Esophagus squamous epithelium (tissue), 5 donors: ENCODE measurements at regions of chr21 and their contacts with region 1.

Region 1: GRCh38 chr21:37366482-37367316 is at the start of gene DYRK1A:
- DNase-seq: peak; percentile 97
- H3K4me3 ChIP-seq: peak within 1 kb of the TSS; percentile 78 to 96 (median 85)
- H3K27ac ChIP-seq: peak within 1 kb of the TSS; percentile 100
- H3K4me1 ChIP-seq: peaks cover 12 to 46% (median 26%) of the 10 kb centered on the region in 3 donors
- H3K27me3 ChIP-seq: no peaks in the 10 kb centered on the region
- CTCF ChIP-seq: no peak
- POLR2A ChIP-seq: peak in 2 of 4 donors; percentile 78 to 83
- total RNA-seq, gene DYRK1A: 37.8 to 61.0 (median 45.4) TPM

Region 2: DNA sequence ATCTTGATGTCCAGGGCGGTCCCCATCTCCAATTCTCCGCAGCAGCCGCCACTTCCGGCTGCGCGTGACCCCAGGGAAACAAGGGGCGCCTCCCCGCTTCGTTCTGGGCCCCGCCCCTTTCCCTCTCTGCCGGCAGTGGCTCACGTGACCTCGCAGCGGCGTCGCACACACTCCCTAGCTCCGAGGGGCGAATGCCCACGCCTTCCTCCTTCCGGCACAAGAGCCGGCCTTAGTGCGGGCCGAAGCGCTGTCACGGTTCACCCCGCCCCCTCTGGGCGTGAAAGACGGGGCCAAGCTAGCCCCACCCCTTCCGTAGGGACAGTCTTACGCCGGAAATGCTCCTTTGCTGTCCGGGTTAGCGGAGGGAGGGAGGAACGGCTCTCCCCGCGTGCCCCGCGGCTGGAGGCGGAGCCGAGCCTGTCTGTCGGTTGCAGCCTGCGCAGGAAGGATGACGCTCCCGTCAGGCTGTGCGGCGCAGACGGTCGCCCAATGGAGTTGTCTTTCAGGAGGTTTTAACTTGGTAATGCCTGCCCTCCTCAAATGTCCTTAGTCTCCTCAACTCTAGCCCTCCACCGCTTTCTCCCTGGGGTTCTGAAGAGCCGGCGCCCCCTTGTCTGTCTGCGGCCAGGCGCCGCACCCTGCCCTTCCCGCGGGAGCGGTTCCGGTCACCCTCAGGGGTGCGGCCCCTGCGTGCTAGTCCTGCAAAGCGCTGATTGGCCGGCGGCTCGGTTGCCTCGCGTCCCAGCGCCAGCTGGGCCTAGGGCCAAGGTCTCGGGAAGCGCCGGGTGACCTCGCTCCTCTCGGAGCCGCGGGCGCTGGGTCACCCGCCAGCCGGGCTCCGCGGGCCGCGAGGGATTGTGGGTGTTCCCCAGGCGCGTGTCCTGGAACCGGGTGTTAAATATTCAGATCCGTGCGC is 99.2 kb before region 1 on chr21 and contains the start of gene VPS26C:
- intact Hi-C with region 1: loop called (anchors 2 kb)
- DNase-seq: peak; percentile 92
- H3K4me3 ChIP-seq: peak within 1 kb of the TSS; percentile 76 to 92 (median 84)
- H3K27ac ChIP-seq: peak within 1 kb of the TSS; percentile 97 to 99 (median 99)
- H3K4me1 ChIP-seq: peaks cover 18 to 74% (median 34%) of the 10 kb centered on the region in 3 donors
- H3K27me3 ChIP-seq: no peaks in the 10 kb centered on the region
- CTCF ChIP-seq: peak in 2 of 6 experiments; percentile 1 to 13
- POLR2A ChIP-seq: peak in 3 of 4 donors; percentile 69 to 77 (median 71)
- total RNA-seq, gene VPS26C: 35.6 to 58.0 (median 44.0) TPM

Region 3: DNA sequence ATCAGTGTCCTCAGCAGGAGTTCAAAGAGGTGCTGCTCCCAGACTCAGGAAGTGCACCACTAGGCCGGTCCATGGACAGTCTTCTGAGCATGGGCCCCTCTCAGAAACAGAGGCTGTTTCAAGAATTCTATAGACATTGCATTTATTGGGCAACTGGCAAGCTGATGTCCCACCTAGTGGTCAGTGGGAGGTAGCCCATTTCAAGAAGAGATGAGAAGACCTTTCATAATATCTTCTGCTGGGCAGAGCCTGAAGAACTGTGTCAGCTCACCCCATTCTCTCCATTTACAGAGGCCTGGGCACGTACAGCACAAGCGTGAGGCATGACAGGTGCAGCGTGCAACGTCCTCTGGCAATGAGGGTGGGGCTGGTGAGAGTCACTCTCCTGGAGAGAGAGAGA is 215.9 kb after region 1 on chr21:
- intact Hi-C with region 1: no loop called
- DNase-seq: no peak
- H3K4me3 ChIP-seq: no peak overlapping the region
- H3K27ac ChIP-seq: no peak overlapping the region
- H3K4me1 ChIP-seq: no peaks in the 10 kb centered on the region
- H3K27me3 ChIP-seq: no peaks in the 10 kb centered on the region
- CTCF ChIP-seq: peak in 5 of 6 experiments; percentile 6 to 44 (median 24)
- POLR2A ChIP-seq: no peak